Activated naive CD8-positive, alpha-beta T cell treated with anti-CD3 and anti-CD28 coated beads, Interleukin-2, amount 10 ng/mL, durations not matched to agents 7 days and 5 days (primary cell): ENCODE measurements at regions of chr1 and their contacts with region 1.

Region 1: DNA sequence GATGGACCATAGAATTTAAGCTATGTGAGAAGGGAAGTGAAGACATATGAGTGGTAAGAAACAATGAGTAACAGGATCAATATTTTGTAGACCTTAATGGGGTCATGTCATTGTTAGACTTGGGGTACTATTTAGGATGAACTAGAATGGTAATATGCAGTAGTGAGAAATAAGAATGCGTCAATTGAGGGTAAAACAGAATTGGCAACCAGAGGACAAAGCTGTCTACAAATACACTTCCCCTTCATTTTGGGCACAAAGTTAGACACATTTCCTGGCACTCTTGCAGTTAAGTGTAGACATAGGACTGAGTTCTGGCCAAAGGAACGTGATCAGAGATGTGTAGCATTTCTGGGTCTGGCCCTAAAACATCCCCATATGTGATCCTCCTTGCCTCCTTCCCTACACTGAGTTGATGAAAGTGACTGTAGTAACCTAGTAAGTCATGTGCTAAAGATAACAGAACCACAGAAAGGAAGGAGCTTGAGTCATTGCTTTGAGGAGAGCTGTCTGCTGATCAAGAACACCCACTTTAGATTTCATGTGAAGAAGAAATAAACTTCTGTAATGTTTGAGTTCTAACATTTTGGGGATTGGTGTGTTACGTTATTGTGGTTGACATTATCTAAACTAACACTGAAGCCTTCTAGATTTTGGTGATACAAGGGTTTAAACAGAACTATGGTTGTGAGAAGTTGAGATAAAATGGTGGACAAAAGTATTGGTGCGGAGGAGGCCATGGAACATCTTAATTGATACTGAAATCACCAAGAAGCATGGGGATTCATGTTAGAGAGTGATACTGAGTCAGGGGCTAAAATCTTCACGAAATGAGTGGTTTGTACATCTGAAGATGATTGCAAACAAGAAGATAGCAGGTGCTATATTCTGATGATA is 41.7 kb downstream of the CD55 start:
- DNase-seq: no peak
- ATAC-seq: peak; percentile 96
- H3K4me3 Mint-ChIP-seq: no peak overlapping the region
- H3K27ac Mint-ChIP-seq: no peak overlapping the region
- H3K4me1 Mint-ChIP-seq: no peaks in the 10 kb centered on the region
- H3K27me3 Mint-ChIP-seq: no peaks in the 10 kb centered on the region

Region 2: GRCh38 chr1:207336559-207337467 is 26.4 kb before region 1 on chr1:
- POLR2A ChIA-PET with region 1: interaction called, 11 read pairs
- DNase-seq: peak; percentile 40
- ATAC-seq: peak; percentile 79
- H3K4me3 Mint-ChIP-seq: peak overlapping the region; percentile 43
- H3K27ac Mint-ChIP-seq: peak overlapping the region; percentile 93
- H3K4me1 Mint-ChIP-seq: peaks cover 52% of the 10 kb centered on the region
- H3K27me3 Mint-ChIP-seq: no peaks in the 10 kb centered on the region

Region 3: GRCh38 chr1:207444514-207445217 is 81.5 kb after region 1 on chr1:
- POLR2A ChIA-PET with region 1: no interaction called
- DNase-seq: no peak
- ATAC-seq: no peak
- H3K4me3 Mint-ChIP-seq: no peak overlapping the region
- H3K27ac Mint-ChIP-seq: no peak overlapping the region
- H3K4me1 Mint-ChIP-seq: peaks cover 2% of the 10 kb centered on the region
- H3K27me3 Mint-ChIP-seq: peaks cover 24% of the 10 kb centered on the region